Breast epithelium (tissue), 4 donors: ENCODE measurements at regions of chr11 and their contacts with region 1.

Region 1: GRCh38 chr11:72641522-72642042 is 32.6 kb downstream of the PDE2A start:
- DNase-seq: no peak
- H3K4me3 ChIP-seq: peak overlapping the region; percentile 57 to 88 (median 60)
- H3K27ac ChIP-seq: peak overlapping the region in 1 of 2 donors; percentile 57
- H3K4me1 ChIP-seq: no peaks in the 10 kb centered on the region
- H3K27me3 ChIP-seq: peaks cover 0 to 24% of the 10 kb centered on the region in 2 donors
- CTCF ChIP-seq: no peak
- POLR2A ChIP-seq: no peak

Region 2: DNA sequence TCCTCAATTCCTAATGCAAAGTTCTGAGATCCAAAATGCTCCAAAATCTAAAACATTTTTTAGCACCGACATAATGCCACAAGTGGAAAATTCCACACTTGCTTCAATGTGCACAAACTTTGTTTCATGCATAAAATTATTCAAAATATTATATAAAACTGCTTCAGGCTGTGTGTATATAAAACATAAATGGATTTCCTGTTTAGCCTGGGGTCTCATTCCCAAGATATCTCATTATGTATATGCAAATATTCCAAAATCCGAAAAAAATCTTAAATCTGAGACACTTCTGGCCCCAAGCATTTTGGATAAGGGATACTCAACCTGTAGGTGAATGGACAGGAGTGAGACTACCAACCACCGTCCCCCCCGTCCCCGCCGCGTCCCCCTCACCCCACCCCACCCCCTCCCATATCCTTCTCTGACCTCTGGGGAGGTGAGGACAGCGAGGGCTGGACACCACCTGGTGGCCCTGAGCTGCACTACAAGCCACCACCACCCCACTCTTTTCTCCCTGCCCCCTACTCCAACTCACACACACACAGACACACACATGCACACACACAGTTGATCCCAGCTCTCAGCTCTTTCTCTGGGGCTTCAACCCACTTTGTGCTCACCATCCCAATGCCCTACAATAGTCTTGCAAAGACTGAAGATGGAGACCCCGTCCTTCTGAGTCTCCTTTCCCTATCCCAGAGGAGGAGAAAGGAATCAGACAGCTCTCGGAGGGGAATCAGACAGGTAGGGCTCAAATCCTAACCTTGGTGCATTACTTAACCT is 68.3 kb before region 1 on chr11:
- intact Hi-C with region 1: no loop called
- DNase-seq: no peak
- H3K4me3 ChIP-seq: no peak overlapping the region
- H3K27ac ChIP-seq: no peak overlapping the region
- H3K4me1 ChIP-seq: no peaks in the 10 kb centered on the region
- H3K27me3 ChIP-seq: no peaks in the 10 kb centered on the region
- CTCF ChIP-seq: peak in 2 of 3 donors; percentile 40 to 47
- POLR2A ChIP-seq: no peak

Region 3: DNA sequence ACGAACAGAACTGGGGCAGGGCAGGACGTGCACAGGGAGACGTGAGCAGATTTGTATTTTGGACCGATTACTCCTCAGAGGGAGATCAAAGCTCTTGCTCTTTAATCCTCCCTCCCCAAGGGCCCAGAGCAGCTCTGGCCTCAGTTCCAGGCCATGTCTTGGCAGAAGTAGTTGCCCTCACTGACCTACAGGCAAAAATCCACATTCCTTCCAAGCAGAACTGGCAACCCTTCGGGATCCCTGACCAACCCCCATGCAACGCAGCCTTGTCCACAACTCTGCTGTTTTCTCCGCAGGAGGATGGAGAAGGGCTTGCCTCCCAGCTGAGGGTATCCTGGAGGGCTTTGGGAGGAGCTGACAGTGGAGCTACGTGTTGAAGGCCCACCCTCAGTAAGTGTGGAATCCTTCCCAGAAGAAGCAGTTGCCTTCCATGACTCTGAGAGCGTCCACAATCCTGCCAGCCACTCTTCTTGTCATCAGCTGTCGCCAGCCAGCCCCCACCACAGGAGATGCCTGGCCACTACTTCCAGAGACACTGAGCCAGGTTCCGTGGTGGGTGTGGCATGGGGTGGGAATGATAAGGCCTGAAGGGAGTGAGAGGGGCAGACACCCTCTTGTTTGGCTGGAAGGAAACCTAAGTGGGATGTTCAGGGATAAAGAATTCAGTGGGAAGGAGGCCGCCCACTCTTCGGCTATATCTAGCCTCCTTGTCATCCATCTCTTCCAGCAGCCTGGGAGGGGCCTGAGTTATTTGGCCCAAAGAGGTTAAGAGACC is 35.4 kb before region 1 on chr11:
- intact Hi-C with region 1: loop called (anchors 1 kb)
- DNase-seq: no peak
- H3K4me3 ChIP-seq: no peak overlapping the region
- H3K27ac ChIP-seq: peak overlapping the region in 1 of 2 donors; percentile 52
- H3K4me1 ChIP-seq: no peaks in the 10 kb centered on the region
- H3K27me3 ChIP-seq: no peaks in the 10 kb centered on the region
- CTCF ChIP-seq: no peak
- POLR2A ChIP-seq: no peak

Region 4: GRCh38 chr11:72752088-72752914 is 110.7 kb after region 1 on chr11 and contains the start of gene ARAP1:
- intact Hi-C with region 1: no loop called
- DNase-seq: peak; percentile 52 to 65
- H3K4me3 ChIP-seq: peak within 1 kb of the TSS; percentile 66 to 81 (median 75)
- H3K27ac ChIP-seq: peak within 1 kb of the TSS; percentile 34 to 77
- H3K4me1 ChIP-seq: no peaks in the 10 kb centered on the region
- H3K27me3 ChIP-seq: no peaks in the 10 kb centered on the region
- CTCF ChIP-seq: no peak
- POLR2A ChIP-seq: no peak
- total RNA-seq, gene ARAP1: 85.9 to 109 (median 97.0) TPM